Activated CD8-positive, alpha-beta T cell treated with anti-CD3 and anti-CD28 coated beads for 36 hours (primary cell): ENCODE measurements at regions of chr17 and their contacts with region 1.

Region 1: DNA sequence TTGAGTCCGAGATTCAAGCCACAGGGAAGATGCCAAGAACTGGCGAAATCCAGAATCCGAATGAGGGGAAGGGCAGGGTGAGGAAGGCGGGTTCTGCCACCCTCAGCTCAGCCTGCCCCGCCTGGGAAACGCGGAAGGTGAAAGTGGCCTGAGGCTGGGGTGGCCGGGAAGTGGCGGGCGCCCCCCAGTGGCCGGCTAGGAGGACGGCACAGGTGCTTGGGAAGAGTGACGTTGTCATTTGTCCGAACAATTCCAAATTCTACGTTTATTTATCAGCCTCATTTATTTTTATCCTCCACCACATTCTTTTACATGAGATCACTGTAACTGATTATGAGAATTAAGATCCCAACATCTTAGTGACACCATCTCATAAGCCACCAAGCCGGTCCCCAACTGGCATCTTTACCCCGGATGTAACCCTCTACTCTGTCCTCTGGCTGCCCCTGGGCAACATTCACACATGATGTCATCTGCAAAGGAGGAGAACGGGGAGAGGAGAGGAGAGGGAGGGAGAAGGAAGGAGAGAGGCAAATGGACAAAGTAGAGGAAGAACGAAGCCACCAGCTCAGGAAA is 21.3 kb downstream of the SRCIN1 start:
- DNase-seq: peak; percentile 69
- ATAC-seq: peak; percentile 78
- H3K4me3 Mint-ChIP-seq: no peak overlapping the region
- H3K27ac Mint-ChIP-seq: no peak overlapping the region
- H3K4me1 Mint-ChIP-seq: peaks cover 4% of the 10 kb centered on the region
- H3K27me3 Mint-ChIP-seq: peaks cover 61% of the 10 kb centered on the region
- CTCF ChIP-seq: peak; percentile 99

Region 2: GRCh38 chr17:38465391-38466345 is 118.8 kb before region 1 on chr17:
- CTCF ChIA-PET with region 1: no interaction called
- POLR2A ChIA-PET with region 1: no interaction called
- intact Hi-C with region 1: no loop called
- DNase-seq: no peak
- ATAC-seq: no peak
- H3K4me3 Mint-ChIP-seq: no peak overlapping the region
- H3K27ac Mint-ChIP-seq: no peak overlapping the region
- H3K4me1 Mint-ChIP-seq: no peaks in the 10 kb centered on the region
- H3K27me3 Mint-ChIP-seq: no peaks in the 10 kb centered on the region
- CTCF ChIP-seq: no peak

Region 3: GRCh38 chr17:38605888-38606645 is 21.6 kb after region 1 on chr17 and contains the start of gene SRCIN1:
- CTCF ChIA-PET with region 1: interaction called, 15 read pairs
- POLR2A ChIA-PET with region 1: interaction called, 4 read pairs
- intact Hi-C with region 1: no loop called
- DNase-seq: peak; percentile 75
- ATAC-seq: peak; percentile 69
- H3K4me3 Mint-ChIP-seq: peak within 1 kb of the TSS; percentile 67
- H3K27ac Mint-ChIP-seq: no peak within 1 kb of the TSS
- H3K4me1 Mint-ChIP-seq: peaks cover 15% of the 10 kb centered on the region
- H3K27me3 Mint-ChIP-seq: peaks cover 56% of the 10 kb centered on the region
- CTCF ChIP-seq: peak; percentile 100
- total RNA-seq, gene SRCIN1: 0.74 to 1.1 TPM